ENCODE measurements at regions of chr2 and their contacts with region 1.

Region 1: DNA sequence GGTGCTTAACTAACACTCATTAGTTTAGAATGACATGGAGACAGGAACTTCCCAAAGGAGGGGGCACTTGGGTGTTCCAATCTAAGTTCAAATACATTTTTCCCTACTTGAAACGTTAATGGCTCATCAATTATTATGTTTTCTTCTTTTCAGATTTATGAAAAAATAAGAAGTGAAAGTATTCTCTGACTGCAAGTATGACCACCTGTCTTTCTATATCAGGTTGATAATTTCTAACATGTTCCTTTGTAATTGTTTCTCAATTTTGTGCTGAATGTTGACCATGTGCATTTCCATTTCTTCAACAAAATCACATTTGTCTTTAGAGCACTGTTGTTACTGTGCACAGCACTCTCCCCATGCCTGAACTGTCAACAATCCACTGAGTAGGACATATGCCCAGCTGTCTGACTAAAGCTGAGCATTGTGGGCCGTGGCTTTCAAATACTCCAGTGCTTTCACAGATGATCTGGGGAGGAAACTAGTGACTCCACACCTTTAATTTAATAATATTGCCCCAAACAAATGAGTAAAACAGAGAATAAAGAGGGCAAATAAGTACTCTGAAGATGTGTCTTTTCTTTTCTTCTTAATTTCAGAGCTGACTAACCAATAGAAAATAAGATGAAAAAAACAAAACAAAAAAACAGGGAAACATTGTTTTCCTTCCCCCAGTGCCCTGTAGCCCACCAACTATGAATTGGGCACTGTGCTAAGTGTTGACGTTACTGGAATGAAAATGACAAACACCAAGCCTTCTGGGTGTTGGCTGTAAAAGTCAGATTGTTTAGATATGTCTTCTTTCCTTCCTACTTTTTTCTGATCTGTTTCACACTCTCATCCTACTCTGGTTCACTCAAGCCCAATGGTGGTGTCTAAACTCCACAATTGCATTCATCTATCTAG is 16.0 kb downstream of the LANCL1 start:
- DNase-seq: no peak
- ATAC-seq: peak; percentile 79
- H3K4me3 ChIP-seq: no peak overlapping the region
- H3K27ac ChIP-seq: peak overlapping the region; percentile 28; the same call in 1 of the 2 replicates
- H3K4me1 ChIP-seq: peaks cover 14% of the 10 kb centered on the region
- H3K27me3 ChIP-seq: no peaks in the 10 kb centered on the region
- CTCF ChIP-seq: no peak
- EP300 ChIP-seq: peak in 1 of 2 experiments; percentile 38; a peak in 2 of 4 replicates
- POLR2A ChIP-seq: no peak
- RAD21 ChIP-seq: no peak

Region 2: DNA sequence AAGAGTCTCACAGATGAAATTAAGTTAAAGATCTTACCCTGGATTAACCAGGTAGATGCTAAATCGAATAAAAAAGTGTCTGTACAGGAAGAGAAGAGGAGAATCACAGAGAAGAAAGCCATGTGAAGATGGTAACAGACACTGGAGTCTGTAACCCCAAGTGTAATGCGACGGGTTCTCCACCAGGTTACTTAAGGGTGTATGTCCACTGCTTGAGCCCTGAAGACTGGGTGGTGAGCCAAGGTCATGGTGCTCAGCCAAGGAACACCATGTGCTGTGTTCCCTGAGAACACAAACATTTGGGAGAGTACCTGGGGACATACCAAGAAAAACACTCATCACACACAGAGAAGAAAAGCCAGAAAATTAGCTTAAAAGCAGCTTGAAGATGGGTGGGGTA is 227.1 kb before region 1 on chr2:
- CTCF ChIA-PET with region 1: no interaction called
- POLR2A ChIA-PET with region 1: no interaction called
- RAD21 ChIA-PET with region 1: no interaction called
- SMC1A ChIA-PET with region 1: no interaction called
- in situ Hi-C with region 1: no loop called
- intact Hi-C with region 1: no loop called
- DNase-seq: no peak
- ATAC-seq: no peak
- H3K4me3 ChIP-seq: no peak overlapping the region
- H3K27ac ChIP-seq: no peak overlapping the region
- H3K4me1 ChIP-seq: no peaks in the 10 kb centered on the region
- H3K27me3 ChIP-seq: 0 out of 4 replicates have a peak, but pooled peaks cover 0 to 1% of the 10 kb centered on the region in 2 experiments
- CTCF ChIP-seq: no peak
- EP300 ChIP-seq: no peak
- POLR2A ChIP-seq: no peak
- RAD21 ChIP-seq: no peak

Region 3: DNA sequence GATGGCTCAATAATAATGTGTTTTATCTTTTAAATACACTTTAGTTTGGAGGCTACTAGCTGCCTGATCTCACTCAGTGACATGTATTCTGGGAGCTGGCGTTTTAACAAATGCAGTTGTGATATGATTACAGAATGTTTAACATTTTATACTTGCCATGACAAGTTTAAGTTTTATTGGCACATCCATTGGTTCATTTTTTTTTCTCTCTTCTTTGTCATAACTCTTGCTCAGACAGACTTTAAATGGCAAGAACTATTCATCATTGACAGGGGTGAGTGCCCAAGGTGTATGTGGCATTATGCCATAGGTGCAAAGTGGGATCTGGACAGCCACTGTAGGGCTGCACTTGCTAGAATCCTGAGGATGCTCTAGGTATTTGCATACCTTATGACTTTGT is 73.5 kb before region 1 on chr2:
- CTCF ChIA-PET with region 1: no interaction called
- POLR2A ChIA-PET with region 1: no interaction called
- RAD21 ChIA-PET with region 1: no interaction called
- SMC1A ChIA-PET with region 1: no interaction called
- in situ Hi-C with region 1: no loop called
- intact Hi-C with region 1: no loop called
- DNase-seq: no peak
- ATAC-seq: no peak
- H3K4me3 ChIP-seq: no peak overlapping the region
- H3K27ac ChIP-seq: no peak overlapping the region
- H3K4me1 ChIP-seq: no peaks in the 10 kb centered on the region
- H3K27me3 ChIP-seq: peaks cover 0 to 2% of the 10 kb centered on the region in 2 experiments; a peak in 1 of 4 replicates
- CTCF ChIP-seq: no peak
- EP300 ChIP-seq: no peak
- POLR2A ChIP-seq: no peak
- RAD21 ChIP-seq: no peak

Region 4: GRCh38 chr2:210445116-210445707 is 15.4 kb before region 1 on chr2:
- CTCF ChIA-PET with region 1: interaction called, 42 read pairs
- POLR2A ChIA-PET with region 1: no interaction called
- RAD21 ChIA-PET with region 1: interaction called, 11 read pairs
- SMC1A ChIA-PET with region 1: interaction called, 44 read pairs
- in situ Hi-C with region 1: no loop called
- intact Hi-C with region 1: no loop called
- DNase-seq: no peak
- ATAC-seq: peak; percentile 58
- H3K4me3 ChIP-seq: no peak overlapping the region
- H3K27ac ChIP-seq: no peak overlapping the region
- H3K4me1 ChIP-seq: peaks cover 5% of the 10 kb centered on the region
- H3K27me3 ChIP-seq: no peaks in the 10 kb centered on the region
- CTCF ChIP-seq: peak; percentile 52 to 62 (median 53)
- EP300 ChIP-seq: no peak
- POLR2A ChIP-seq: no peak
- RAD21 ChIP-seq: peak; percentile 64

Region 5: GRCh38 chr2:210476194-210477128 is 15.9 kb after region 1 on chr2 and contains the start of gene LANCL1:
- CTCF ChIA-PET with region 1: interaction called, 7 read pairs
- POLR2A ChIA-PET with region 1: interaction called, 34 read pairs
- RAD21 ChIA-PET with region 1: interaction called, 10 read pairs
- SMC1A ChIA-PET with region 1: interaction called, 30 read pairs
- in situ Hi-C with region 1: no loop called
- intact Hi-C with region 1: no loop called
- DNase-seq: peak; percentile 67
- ATAC-seq: peak; percentile 100
- H3K4me3 ChIP-seq: peak within 1 kb of the TSS; percentile 90
- H3K27ac ChIP-seq: peak within 1 kb of the TSS; percentile 80
- H3K4me1 ChIP-seq: no peaks in the 10 kb centered on the region
- H3K27me3 ChIP-seq: no peaks in the 10 kb centered on the region
- CTCF ChIP-seq: no peak; a peak in 1 of 6 replicates
- EP300 ChIP-seq: no peak
- POLR2A ChIP-seq: peak; percentile 90
- RAD21 ChIP-seq: no peak
- polyA plus RNA-seq, gene LANCL1: 13.6 to 18.4 TPM

Region 6: GRCh38 chr2:210523650-210524289 is 63.2 kb after region 1 on chr2:
- CTCF ChIA-PET with region 1: no interaction called
- POLR2A ChIA-PET with region 1: no interaction called
- RAD21 ChIA-PET with region 1: no interaction called
- SMC1A ChIA-PET with region 1: no interaction called
- in situ Hi-C with region 1: no loop called
- intact Hi-C with region 1: no loop called
- DNase-seq: no peak
- ATAC-seq: no peak
- H3K4me3 ChIP-seq: no peak overlapping the region
- H3K27ac ChIP-seq: no peak overlapping the region
- H3K4me1 ChIP-seq: no peaks in the 10 kb centered on the region
- H3K27me3 ChIP-seq: no peaks in the 10 kb centered on the region
- CTCF ChIP-seq: no peak
- EP300 ChIP-seq: no peak
- POLR2A ChIP-seq: no peak
- RAD21 ChIP-seq: no peak